Dorsolateral prefrontal cortex (tissue), 120 donors: ENCODE measurements at regions of chr16 and their contacts with region 1.

Region 1: GRCh38 chr16:87146676-87147399 is 170.4 kb downstream of the C16orf95 start:
- DNase-seq: no peak
- H3K4me3 ChIP-seq: no peak overlapping the region
- H3K27ac ChIP-seq: no peak overlapping the region
- H3K27me3 ChIP-seq: no peaks in the 10 kb centered on the region
- CTCF ChIP-seq: no peak

Region 2: DNA sequence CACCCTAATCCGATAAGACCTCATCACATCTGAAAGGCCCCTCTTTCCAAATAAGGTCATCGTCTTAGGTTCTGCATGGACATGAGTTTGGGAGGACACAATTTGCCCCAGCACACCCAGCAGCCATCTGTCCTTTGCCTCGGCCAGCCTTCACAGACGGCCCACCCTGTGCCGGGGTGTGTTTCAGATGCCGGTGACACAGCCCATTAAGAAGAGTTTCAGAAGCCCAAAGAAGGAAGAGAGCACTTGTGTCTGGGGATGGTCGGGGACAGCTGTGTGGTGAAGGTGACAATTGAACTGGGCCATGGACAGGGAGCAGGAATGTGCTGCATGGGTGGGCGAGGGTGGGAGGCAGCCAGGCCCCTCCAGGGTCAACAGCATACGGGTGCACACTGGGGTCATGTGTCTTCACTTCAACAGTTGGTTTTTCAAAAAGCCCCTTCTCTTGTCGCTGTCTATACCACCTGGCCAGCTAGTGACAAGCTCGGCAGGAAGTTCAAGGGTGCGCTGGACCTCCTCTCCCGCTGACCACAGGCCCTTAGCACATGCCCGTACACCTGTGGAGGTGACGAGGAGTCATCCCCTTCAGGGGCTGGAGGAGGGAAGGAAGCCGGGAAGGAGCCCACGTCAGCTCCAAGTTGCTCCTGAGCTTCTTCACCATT is 12.7 kb before region 1 on chr16:
- intact Hi-C with region 1: loop called in 1 of 2 experiments (anchors 1 kb)
- DNase-seq: no peak
- H3K4me3 ChIP-seq: no peak overlapping the region
- H3K27ac ChIP-seq: peak overlapping the region in 1 of 59 donors; percentile 35
- H3K27me3 ChIP-seq: no peaks in the 10 kb centered on the region
- CTCF ChIP-seq: no peak